Naive thymus-derived CD4-positive, alpha-beta T cell (primary cell): ENCODE measurements at regions of chr19 and their contacts with region 1.

Region 1: DNA sequence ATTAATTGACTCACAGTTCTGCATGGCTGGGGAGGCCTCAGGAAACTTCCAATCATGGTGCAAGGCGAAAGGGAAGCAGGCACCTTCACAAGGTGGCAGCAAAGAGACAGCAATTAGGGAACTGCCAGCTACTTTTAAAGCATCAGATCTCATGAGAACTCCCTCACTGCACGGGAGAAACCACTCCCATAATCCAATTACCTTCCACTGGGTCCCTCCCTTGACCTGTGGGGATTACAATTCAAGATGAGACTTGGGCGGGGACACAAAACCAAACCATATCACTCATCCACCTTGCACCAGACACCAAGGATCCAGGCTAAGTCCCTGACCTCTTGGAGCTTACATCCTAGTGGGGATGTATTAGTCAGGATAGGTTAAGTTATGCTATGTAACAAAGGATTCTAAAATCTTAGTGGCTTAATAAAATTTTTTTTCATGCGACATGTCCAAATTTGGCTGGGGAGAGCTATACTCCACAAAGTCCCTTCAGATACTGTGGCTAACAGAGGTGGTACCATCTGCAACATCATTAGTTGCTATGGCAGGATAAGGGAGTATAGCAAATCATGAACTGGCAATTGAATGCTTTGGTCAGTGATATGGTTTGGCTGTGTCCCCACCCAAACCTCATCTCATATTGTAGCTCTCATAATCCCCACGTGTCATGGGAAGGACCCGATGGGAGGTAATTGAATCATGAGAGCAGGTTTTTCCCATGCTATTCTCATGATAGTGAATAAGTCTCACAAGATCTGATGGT is 8.3 kb upstream of the FAM187B start:
- DNase-seq: peak in 3 of 9 donors; percentile 15 to 35 (median 23)
- ATAC-seq: no peak
- H3K4me3 ChIP-seq: no peak overlapping the region
- H3K4me3 Mint-ChIP-seq: no peak overlapping the region
- H3K27ac ChIP-seq: no peak overlapping the region
- H3K27ac Mint-ChIP-seq: peak overlapping the region in 6 of 9 donors; percentile 11 to 62 (median 26)
- H3K4me1 ChIP-seq: peaks cover 13 to 17% of the 10 kb centered on the region in 2 donors
- H3K4me1 Mint-ChIP-seq: peaks cover 13 to 45% (median 35%) of the 10 kb centered on the region in 7 donors
- H3K27me3 ChIP-seq: no peaks in the 10 kb centered on the region
- H3K27me3 Mint-ChIP-seq: peaks cover 0 to 20% (median 0%) of the 10 kb centered on the region in 5 donors

Region 2: GRCh38 chr19:35126624-35126959 is 110.2 kb before region 1 on chr19:
- CTCF ChIA-PET with region 1: no interaction called
- POLR2A ChIA-PET with region 1: no interaction called
- intact Hi-C with region 1: no loop called
- DNase-seq: no peak
- ATAC-seq: no peak
- H3K4me3 ChIP-seq: no peak overlapping the region
- H3K4me3 Mint-ChIP-seq: no peak overlapping the region
- H3K27ac ChIP-seq: no peak overlapping the region
- H3K27ac Mint-ChIP-seq: no peak overlapping the region
- H3K4me1 ChIP-seq: peaks cover 3 to 11% of the 10 kb centered on the region in 2 donors
- H3K4me1 Mint-ChIP-seq: peaks cover 12 to 17% (median 13%) of the 10 kb centered on the region in 7 donors
- H3K27me3 ChIP-seq: no peaks in the 10 kb centered on the region
- H3K27me3 Mint-ChIP-seq: no peaks in the 10 kb centered on the region

Region 3: GRCh38 chr19:35224681-35225571 is 11.9 kb before region 1 on chr19:
- CTCF ChIA-PET with region 1: interaction called, 4 read pairs
- POLR2A ChIA-PET with region 1: interaction called, 10 read pairs
- intact Hi-C with region 1: no loop called
- DNase-seq: peak in 1 of 9 donors; percentile 21
- ATAC-seq: no peak
- H3K4me3 ChIP-seq: no peak overlapping the region
- H3K4me3 Mint-ChIP-seq: no peak overlapping the region
- H3K27ac ChIP-seq: no peak overlapping the region
- H3K27ac Mint-ChIP-seq: peak overlapping the region in 6 of 9 donors; percentile 22 to 84 (median 48)
- H3K4me1 ChIP-seq: peaks cover 0 to 28% of the 10 kb centered on the region in 2 donors
- H3K4me1 Mint-ChIP-seq: peaks cover 19 to 42% (median 36%) of the 10 kb centered on the region in 7 donors
- H3K27me3 ChIP-seq: no peaks in the 10 kb centered on the region
- H3K27me3 Mint-ChIP-seq: no peaks in the 10 kb centered on the region

Region 4: DNA sequence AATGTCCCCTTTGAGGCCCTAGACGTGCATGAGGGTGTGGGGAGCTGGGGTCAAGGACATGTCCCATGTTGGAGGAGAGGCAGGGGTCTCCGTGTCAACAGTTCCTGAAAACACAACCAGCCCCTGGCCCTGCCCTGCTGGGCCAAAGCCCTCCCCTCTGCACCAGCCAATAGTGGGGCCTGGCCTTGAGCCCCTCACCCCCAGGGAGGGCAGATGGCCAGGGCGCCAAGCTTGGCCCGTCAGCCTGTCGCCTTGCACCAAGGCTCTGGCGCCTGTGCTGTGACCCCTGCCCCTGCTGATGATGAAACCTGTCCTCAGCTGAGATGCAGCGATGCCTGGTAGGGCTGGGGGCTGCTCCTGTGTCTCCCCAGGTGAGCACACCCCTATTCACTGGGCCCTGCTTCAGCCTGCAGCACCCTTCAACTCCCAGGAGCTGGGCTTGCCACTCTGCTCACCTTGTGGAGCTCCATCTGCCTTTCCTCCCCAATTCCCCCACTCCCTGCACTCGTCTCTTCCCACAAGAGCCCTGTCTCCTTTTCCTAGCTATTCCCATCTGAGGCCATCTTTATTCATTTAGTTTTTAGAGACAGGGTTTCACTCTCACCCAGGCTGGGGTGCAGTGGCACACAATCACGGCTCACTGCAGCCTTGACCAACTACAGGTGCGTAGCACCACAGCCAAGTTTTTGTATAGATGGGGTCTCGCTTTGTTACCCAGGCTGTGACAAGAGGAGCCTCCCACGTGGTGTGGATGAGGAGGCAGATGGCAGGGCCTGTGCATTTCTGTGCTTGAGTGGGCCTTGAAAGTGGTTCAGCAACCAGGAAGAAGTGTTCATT is 43.4 kb after region 1 on chr19:
- CTCF ChIA-PET with region 1: no interaction called
- POLR2A ChIA-PET with region 1: no interaction called
- intact Hi-C with region 1: no loop called
- DNase-seq: no peak
- ATAC-seq: no peak
- H3K4me3 ChIP-seq: no peak overlapping the region
- H3K4me3 Mint-ChIP-seq: no peak overlapping the region
- H3K27ac ChIP-seq: no peak overlapping the region
- H3K27ac Mint-ChIP-seq: peak overlapping the region in 2 of 9 donors; percentile 65 to 72
- H3K4me1 ChIP-seq: no peaks in the 10 kb centered on the region
- H3K4me1 Mint-ChIP-seq: peaks cover 0 to 14% (median 4%) of the 10 kb centered on the region in 7 donors
- H3K27me3 ChIP-seq: no peaks in the 10 kb centered on the region
- H3K27me3 Mint-ChIP-seq: peaks cover 5 to 19% (median 16%) of the 10 kb centered on the region in 5 donors